Esophagus muscularis mucosa (tissue), 4 donors: ENCODE measurements at regions of chr13 and their contacts with region 1.

Region 1: GRCh38 chr13:35720690-35721554 is 244.4 kb upstream of the MAB21L1 start:
- DNase-seq: no peak
- H3K4me3 ChIP-seq: peak overlapping the region; percentile 20 to 32 (median 26)
- H3K27ac ChIP-seq: peak overlapping the region; percentile 21 to 70 (median 57)
- H3K4me1 ChIP-seq: peaks cover 27 to 61% (median 59%) of the 10 kb centered on the region in 4 donors
- H3K27me3 ChIP-seq: no peaks in the 10 kb centered on the region
- CTCF ChIP-seq: peak in 2 of 3 experiments; percentile 92 to 93
- EP300 ChIP-seq: no peak
- POLR2A ChIP-seq: no peak

Region 2: GRCh38 chr13:35630551-35631275 is 90.2 kb before region 1 on chr13:
- intact Hi-C with region 1: loop called (anchors 2 kb)
- DNase-seq: no peak
- H3K4me3 ChIP-seq: no peak overlapping the region
- H3K27ac ChIP-seq: no peak overlapping the region
- H3K4me1 ChIP-seq: no peaks in the 10 kb centered on the region
- H3K27me3 ChIP-seq: no peaks in the 10 kb centered on the region
- CTCF ChIP-seq: peak; percentile 64 to 74 (median 72)
- EP300 ChIP-seq: no peak
- POLR2A ChIP-seq: no peak

Region 3: DNA sequence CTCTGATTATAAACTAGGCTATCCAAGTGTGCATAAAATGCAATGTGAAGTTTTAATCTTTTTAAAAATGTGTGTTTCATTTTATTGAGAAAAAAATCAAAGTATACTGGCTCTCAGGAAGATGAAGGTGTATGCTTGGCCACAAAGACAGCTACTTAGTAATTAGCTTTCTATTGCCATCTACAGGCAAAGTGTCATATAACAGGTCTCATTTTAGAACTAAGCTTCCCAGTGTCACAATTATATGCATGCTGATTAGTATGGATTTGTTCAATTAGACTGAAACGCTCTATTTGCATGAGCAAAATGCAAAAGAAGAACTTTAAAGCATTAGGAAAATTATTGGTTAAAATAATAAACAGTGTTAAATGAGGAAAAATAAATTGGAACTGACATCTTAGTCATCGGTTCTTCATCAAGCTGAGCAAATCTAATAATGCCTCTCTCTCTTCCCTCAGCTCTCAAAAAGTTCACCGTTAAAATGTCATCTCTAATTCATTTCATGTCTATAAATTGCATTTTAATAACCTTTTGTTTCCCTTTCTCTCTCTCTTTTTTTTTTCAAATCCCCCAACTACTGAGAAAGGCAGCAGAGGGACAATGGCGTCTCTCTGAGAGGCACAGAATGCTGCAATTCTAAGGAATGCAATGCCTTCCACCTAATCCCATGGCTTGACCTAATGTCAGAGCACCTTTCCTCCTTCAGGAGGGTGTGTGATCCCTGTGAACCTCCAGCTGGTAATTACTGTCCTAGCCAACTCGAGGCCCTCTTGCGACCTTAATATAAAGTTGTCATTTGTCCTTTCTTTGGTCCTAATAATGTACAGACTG is 68.6 kb after region 1 on chr13:
- intact Hi-C with region 1: loop called (anchors 10 kb)
- DNase-seq: no peak
- H3K4me3 ChIP-seq: no peak overlapping the region
- H3K27ac ChIP-seq: no peak overlapping the region
- H3K4me1 ChIP-seq: peaks cover 0 to 63% (median 56%) of the 10 kb centered on the region in 4 donors
- H3K27me3 ChIP-seq: no peaks in the 10 kb centered on the region
- CTCF ChIP-seq: peak; percentile 50 to 66 (median 65)
- EP300 ChIP-seq: no peak
- POLR2A ChIP-seq: no peak

Region 4: GRCh38 chr13:35818633-35819067 is 97.7 kb after region 1 on chr13:
- intact Hi-C with region 1: loop called (anchors 10 kb)
- DNase-seq: no peak
- H3K4me3 ChIP-seq: no peak overlapping the region
- H3K27ac ChIP-seq: peak overlapping the region in 3 of 4 donors; percentile 52 to 67 (median 61)
- H3K4me1 ChIP-seq: peaks cover 0 to 29% (median 21%) of the 10 kb centered on the region in 4 donors
- H3K27me3 ChIP-seq: no peaks in the 10 kb centered on the region
- CTCF ChIP-seq: peak; percentile 72 to 82 (median 74)
- EP300 ChIP-seq: no peak
- POLR2A ChIP-seq: no peak

Region 5: GRCh38 chr13:35961461-35962220 is 240.7 kb after region 1 on chr13:
- intact Hi-C with region 1: loop called (anchors 5 kb)
- DNase-seq: no peak
- H3K4me3 ChIP-seq: no peak overlapping the region
- H3K27ac ChIP-seq: no peak overlapping the region
- H3K4me1 ChIP-seq: peaks cover 3 to 57% (median 32%) of the 10 kb centered on the region in 4 donors
- H3K27me3 ChIP-seq: no peaks in the 10 kb centered on the region
- CTCF ChIP-seq: peak; percentile 40 to 54 (median 42)
- EP300 ChIP-seq: no peak
- POLR2A ChIP-seq: no peak